Naive thymus-derived CD4-positive, alpha-beta T cell (primary cell): ENCODE measurements at regions of chr16 and their contacts with region 1.

Region 1: DNA sequence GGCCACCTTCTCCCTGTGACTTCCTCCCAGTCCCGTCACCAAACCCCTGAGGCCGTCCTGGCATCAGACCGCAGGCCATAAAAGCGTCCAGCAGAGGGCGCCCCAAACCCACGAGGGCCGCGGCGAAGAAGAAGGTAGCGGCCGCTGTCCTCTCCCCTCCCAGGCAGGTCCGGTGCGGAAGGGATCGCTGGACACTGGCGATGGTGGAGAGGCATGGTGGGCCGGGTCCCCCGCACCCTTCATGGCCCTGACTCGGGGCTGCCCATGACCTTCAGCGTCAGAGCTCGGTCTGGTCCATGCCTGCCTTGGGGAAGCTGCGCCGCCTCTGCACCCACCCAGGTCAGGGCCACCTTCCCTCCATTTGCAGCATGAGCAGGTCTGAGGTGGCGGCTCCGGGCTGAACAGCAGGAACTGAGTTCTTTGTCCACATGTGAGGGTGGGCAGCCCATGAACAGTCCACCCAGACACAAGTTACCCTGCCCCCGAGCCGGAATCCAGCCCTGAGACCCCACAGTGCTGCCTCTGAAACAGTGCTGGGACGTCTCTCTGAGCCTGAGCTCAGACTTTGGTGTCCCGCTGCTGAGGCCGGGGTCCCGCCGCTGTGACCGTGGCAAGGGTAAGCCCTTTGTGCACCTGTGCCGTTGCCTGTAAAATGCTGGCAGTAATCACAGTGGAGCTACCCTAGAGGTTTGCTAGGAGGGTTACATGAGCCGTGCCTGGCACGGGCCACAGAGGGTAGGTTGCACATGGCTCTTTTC is 40.8 kb upstream of the CMIP start:
- DNase-seq: peak; percentile 45 to 86 (median 68)
- ATAC-seq: peak; percentile 96
- H3K4me3 ChIP-seq: peak overlapping the region; percentile 34
- H3K4me3 Mint-ChIP-seq: peak overlapping the region in 5 of 10 donors; percentile 25 to 43 (median 32)
- H3K27ac ChIP-seq: no peak overlapping the region
- H3K27ac Mint-ChIP-seq: peak overlapping the region in 1 of 9 donors; percentile 18
- H3K4me1 ChIP-seq: no peaks in the 10 kb centered on the region
- H3K4me1 Mint-ChIP-seq: peaks cover 0 to 4% (median 0%) of the 10 kb centered on the region in 7 donors
- H3K27me3 ChIP-seq: no peaks in the 10 kb centered on the region
- H3K27me3 Mint-ChIP-seq: peaks cover 0 to 6% (median 0%) of the 10 kb centered on the region in 5 donors

Region 2: DNA sequence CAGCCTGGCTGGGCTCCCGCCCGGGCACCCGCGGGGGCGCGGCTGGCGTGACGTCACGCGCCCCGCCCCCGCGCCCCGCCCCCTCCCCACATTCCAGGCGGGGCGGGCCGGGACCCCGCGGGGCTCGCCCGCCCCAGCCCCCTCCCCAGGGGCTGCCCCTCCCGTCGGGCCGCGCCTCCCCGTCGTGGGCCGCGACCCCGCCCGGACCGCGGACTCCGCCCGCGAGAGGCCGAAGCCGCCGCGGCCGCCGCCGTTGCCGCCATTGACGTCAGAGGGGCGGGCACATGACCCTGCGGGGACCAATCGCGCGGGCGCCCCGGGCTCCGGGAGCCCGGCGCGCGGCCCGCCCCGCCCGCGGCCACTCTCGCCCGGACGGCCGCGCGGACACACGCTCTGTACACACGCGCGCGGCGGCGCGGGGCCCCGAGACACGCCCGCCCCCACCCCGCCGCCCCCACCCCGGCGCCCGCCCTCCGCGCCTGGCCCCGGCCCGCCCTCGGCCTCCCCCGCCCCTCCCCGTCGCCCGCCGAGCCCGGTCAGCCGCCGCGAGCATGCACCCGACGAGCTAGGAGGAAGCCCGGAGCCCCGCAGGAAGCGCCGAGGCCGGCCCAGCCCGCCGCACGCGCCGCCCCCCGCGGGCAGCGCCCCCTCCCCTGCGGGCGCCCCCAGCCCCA is 40.8 kb after region 1 on chr16 and contains the start of gene CMIP:
- CTCF ChIA-PET with region 1: no interaction called
- POLR2A ChIA-PET with region 1: no interaction called
- intact Hi-C with region 1: loop called in 1 of 2 experiments (anchors 2 kb)
- DNase-seq: peak; percentile 66 to 89 (median 79)
- ATAC-seq: peak; percentile 88
- H3K4me3 ChIP-seq: peak within 1 kb of the TSS; percentile 91
- H3K4me3 Mint-ChIP-seq: peak within 1 kb of the TSS; percentile 85 to 94 (median 90)
- H3K27ac ChIP-seq: peak within 1 kb of the TSS; percentile 77
- H3K27ac Mint-ChIP-seq: peak within 1 kb of the TSS; percentile 90 to 97 (median 94)
- H3K4me1 ChIP-seq: peaks cover 35 to 37% of the 10 kb centered on the region in 2 donors
- H3K4me1 Mint-ChIP-seq: peaks cover 26 to 54% (median 48%) of the 10 kb centered on the region in 7 donors
- H3K27me3 ChIP-seq: no peaks in the 10 kb centered on the region
- H3K27me3 Mint-ChIP-seq: peaks cover 0 to 41% (median 0%) of the 10 kb centered on the region in 5 donors
- total RNA-seq, gene CMIP: 28.9 to 75.4 (median 38.2) TPM

Region 3: GRCh38 chr16:81616321-81617055 is 212.7 kb after region 1 on chr16:
- CTCF ChIA-PET with region 1: interaction called, 12 read pairs
- POLR2A ChIA-PET with region 1: no interaction called
- intact Hi-C with region 1: loop called (anchors 1 to 2 kb)
- DNase-seq: peak; percentile 44 to 64 (median 56)
- ATAC-seq: peak; percentile 92
- H3K4me3 ChIP-seq: peak overlapping the region; percentile 34
- H3K4me3 Mint-ChIP-seq: peak overlapping the region in 9 of 10 donors; percentile 26 to 64 (median 50)
- H3K27ac ChIP-seq: peak overlapping the region; percentile 70
- H3K27ac Mint-ChIP-seq: peak overlapping the region in 5 of 9 donors; percentile 78 to 93 (median 88)
- H3K4me1 ChIP-seq: peaks cover 22% of the 10 kb centered on the region in 2 donors
- H3K4me1 Mint-ChIP-seq: peaks cover 0 to 12% (median 10%) of the 10 kb centered on the region in 7 donors
- H3K27me3 ChIP-seq: no peaks in the 10 kb centered on the region
- H3K27me3 Mint-ChIP-seq: no peaks in the 10 kb centered on the region

Region 4: DNA sequence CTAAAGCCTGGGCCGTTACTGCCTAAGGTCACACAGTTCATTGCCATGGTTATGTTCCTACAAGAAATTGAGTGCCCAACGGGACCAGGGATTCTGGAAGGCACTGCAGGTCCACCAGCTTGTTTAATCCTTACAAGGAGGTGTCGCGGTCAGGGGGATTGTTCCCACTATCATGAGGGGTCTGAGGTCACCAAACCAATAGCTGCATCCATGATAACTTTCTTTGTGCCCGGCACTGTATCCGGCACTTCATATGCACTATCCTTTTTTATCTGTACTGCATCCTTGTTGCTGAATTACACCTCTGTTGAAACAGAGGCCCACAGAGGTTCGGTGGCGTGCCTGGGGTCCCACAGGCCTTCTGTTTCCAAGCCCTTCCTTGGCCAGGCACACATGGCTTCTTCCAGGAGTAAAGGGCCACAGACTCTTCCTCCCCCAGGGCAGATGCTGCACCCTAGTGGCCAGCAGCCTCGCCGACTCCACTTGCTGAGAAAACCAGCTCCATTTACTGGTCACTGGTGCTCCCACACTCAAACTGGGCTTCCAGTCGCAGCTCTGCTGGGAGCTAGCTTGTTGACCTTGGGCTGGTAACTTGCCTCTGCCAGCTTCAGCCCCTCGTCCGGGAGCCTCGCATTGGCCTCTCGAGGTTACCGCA is 293.3 kb after region 1 on chr16:
- CTCF ChIA-PET with region 1: interaction called, 4 read pairs
- POLR2A ChIA-PET with region 1: no interaction called
- intact Hi-C with region 1: loop called (anchors 1 kb)
- DNase-seq: peak in 5 of 9 donors; percentile 31 to 57 (median 32)
- ATAC-seq: peak; percentile 61
- H3K4me3 ChIP-seq: no peak overlapping the region
- H3K4me3 Mint-ChIP-seq: no peak overlapping the region
- H3K27ac ChIP-seq: no peak overlapping the region
- H3K27ac Mint-ChIP-seq: peak overlapping the region in 1 of 9 donors; percentile 19
- H3K4me1 ChIP-seq: no peaks in the 10 kb centered on the region
- H3K4me1 Mint-ChIP-seq: peaks cover 0 to 16% (median 0%) of the 10 kb centered on the region in 7 donors
- H3K27me3 ChIP-seq: no peaks in the 10 kb centered on the region
- H3K27me3 Mint-ChIP-seq: no peaks in the 10 kb centered on the region

Region 5: GRCh38 chr16:81737885-81738786 is 334.3 kb after region 1 on chr16:
- CTCF ChIA-PET with region 1: interaction called, 4 read pairs
- POLR2A ChIA-PET with region 1: no interaction called
- intact Hi-C with region 1: loop called (anchors 1 to 5 kb)
- DNase-seq: peak; percentile 69 to 88 (median 83)
- ATAC-seq: peak; percentile 95
- H3K4me3 ChIP-seq: peak overlapping the region; percentile 28
- H3K4me3 Mint-ChIP-seq: peak overlapping the region; percentile 67 to 81 (median 76)
- H3K27ac ChIP-seq: no peak overlapping the region
- H3K27ac Mint-ChIP-seq: peak overlapping the region in 6 of 9 donors; percentile 34 to 75 (median 42)
- H3K4me1 ChIP-seq: peaks cover 0 to 3% of the 10 kb centered on the region in 2 donors
- H3K4me1 Mint-ChIP-seq: peaks cover 0 to 18% (median 5%) of the 10 kb centered on the region in 7 donors
- H3K27me3 ChIP-seq: no peaks in the 10 kb centered on the region
- H3K27me3 Mint-ChIP-seq: peaks cover 0 to 2% (median 0%) of the 10 kb centered on the region in 5 donors